ENCODE measurements at regions of chr3 and their contacts with region 1.

Region 1: GRCh38 chr3:21229426-21230135 is 521.4 kb downstream of the ZNF385D start:
- DNase-seq: no peak
- ATAC-seq: no peak
- H3K4me3 Mint-ChIP-seq: no peak overlapping the region
- H3K27ac Mint-ChIP-seq: no peak overlapping the region
- H3K4me1 Mint-ChIP-seq: no peaks in the 10 kb centered on the region
- H3K27me3 Mint-ChIP-seq: no peaks in the 10 kb centered on the region

Region 2: GRCh38 chr3:21174461-21174860 is 55.1 kb before region 1 on chr3:
- CTCF ChIA-PET with region 1: no interaction called
- POLR2A ChIA-PET with region 1: interaction called, 15 read pairs
- intact Hi-C with region 1: no loop called
- DNase-seq: no peak
- ATAC-seq: no peak
- H3K4me3 Mint-ChIP-seq: no peak overlapping the region
- H3K27ac Mint-ChIP-seq: no peak overlapping the region
- H3K4me1 Mint-ChIP-seq: no peaks in the 10 kb centered on the region
- H3K27me3 Mint-ChIP-seq: no peaks in the 10 kb centered on the region

Region 3: GRCh38 chr3:21216598-21216997 is 13.0 kb before region 1 on chr3:
- CTCF ChIA-PET with region 1: no interaction called
- POLR2A ChIA-PET with region 1: no interaction called
- intact Hi-C with region 1: no loop called
- DNase-seq: no peak
- ATAC-seq: no peak
- H3K4me3 Mint-ChIP-seq: no peak overlapping the region
- H3K27ac Mint-ChIP-seq: no peak overlapping the region
- H3K4me1 Mint-ChIP-seq: no peaks in the 10 kb centered on the region
- H3K27me3 Mint-ChIP-seq: no peaks in the 10 kb centered on the region

Measured in activated CD4-positive, alpha-beta T cell treated with anti-CD3 and anti-CD28 coated beads for 36 hours (primary cell).